Caco-2 (cell line): ENCODE measurements at regions of chr2 and their contacts with region 1.

Region 1: DNA sequence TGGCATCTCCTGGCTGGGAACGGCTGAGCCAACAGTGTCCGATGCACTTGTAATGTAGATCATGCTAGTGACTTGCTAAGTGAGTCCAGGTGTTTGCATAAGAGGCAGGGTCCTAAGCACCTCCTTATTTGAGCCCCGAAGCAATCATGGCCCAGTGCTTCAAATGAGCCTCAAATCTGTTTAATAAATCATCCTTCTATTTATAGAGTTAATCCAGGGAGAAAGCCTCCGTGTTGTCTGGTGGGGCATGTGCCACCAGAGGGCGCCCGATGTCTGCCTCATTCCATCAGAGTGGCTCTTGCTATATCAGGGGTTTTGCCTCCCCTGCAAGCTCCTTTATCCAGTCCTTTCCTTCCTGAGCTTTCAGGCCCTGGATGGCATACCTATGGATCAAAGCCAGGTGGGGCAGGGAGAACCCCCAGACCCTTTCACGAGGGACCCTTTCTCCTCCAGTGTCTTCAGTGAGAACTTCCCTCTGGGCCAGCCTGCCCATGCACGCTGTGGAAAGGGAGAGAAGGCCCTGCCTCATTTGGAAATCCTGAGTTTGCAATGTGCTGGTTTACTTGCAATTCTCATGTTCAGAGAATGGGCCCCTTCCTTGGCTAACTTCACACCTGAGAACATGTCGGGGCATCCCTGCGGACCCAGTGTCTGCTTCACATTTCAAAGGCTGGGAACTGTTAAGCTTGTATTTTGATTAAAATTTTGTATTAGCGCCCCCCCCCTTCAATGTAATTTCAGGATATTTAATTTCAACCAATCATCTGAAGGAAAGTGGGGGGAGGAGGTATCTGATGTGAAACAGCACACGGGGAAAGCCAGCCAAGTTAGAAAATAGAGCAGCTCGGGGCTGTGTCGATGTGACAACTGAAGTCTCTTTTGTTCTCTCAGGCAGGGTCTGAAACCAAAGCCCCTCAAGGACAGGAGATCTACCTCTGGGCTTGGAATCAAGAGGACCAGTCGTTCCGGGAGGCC is 39.7 kb downstream of the RDH14 start:
- DNase-seq: peak; percentile 75 to 79
- H3K4me3 ChIP-seq: no peak overlapping the region
- H3K4me3 Mint-ChIP-seq: no peak overlapping the region
- H3K27ac Mint-ChIP-seq: no peak overlapping the region
- H3K4me1 ChIP-seq: 0 out of 2 replicates have a peak, but pooled peaks cover 4% of the 10 kb centered on the region
- H3K4me1 Mint-ChIP-seq: no peaks in the 10 kb centered on the region
- H3K27me3 ChIP-seq: no peaks in the 10 kb centered on the region
- H3K27me3 Mint-ChIP-seq: peaks cover 3% of the 10 kb centered on the region
- CTCF ChIP-seq: peak; percentile 93 to 96

Region 2: GRCh38 chr2:18387441-18388206 is 133.1 kb before region 1 on chr2:
- CTCF ChIA-PET with region 1: no interaction called
- POLR2A ChIA-PET with region 1: no interaction called
- intact Hi-C with region 1: loop called (anchors 2 kb)
- DNase-seq: peak; percentile 72 to 82
- H3K4me3 ChIP-seq: no peak overlapping the region
- H3K4me3 Mint-ChIP-seq: no peak overlapping the region
- H3K27ac Mint-ChIP-seq: no peak overlapping the region
- H3K4me1 ChIP-seq: no peaks in the 10 kb centered on the region; the same call in 1 of the 2 replicates
- H3K4me1 Mint-ChIP-seq: no peaks in the 10 kb centered on the region
- H3K27me3 ChIP-seq: no peaks in the 10 kb centered on the region; the same call in 1 of the 2 replicates
- H3K27me3 Mint-ChIP-seq: peaks cover 3% of the 10 kb centered on the region
- CTCF ChIP-seq: peak; percentile 95 to 98

Region 3: DNA sequence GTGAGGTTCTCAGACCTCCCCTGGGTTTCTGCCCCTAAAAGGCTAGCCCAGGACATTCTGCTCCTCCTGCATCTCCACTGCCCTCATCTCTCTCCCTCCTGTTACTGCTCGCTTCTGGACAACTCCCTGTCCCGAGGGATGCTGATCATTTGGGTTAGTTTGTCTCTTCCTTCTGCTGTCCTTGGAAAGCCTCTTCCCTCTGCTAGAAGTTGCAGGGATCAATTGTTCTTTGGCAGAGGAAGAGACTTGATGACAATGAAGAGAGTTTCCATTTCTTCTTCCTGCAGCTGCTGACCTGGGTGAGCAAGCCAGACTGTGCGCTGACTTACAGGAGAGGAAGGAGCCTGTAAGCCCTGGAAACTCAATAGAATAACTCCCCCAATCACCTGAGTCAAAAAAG is 29.2 kb before region 1 on chr2:
- CTCF ChIA-PET with region 1: no interaction called
- POLR2A ChIA-PET with region 1: no interaction called
- intact Hi-C with region 1: no loop called
- DNase-seq: no peak
- H3K4me3 ChIP-seq: no peak overlapping the region
- H3K4me3 Mint-ChIP-seq: no peak overlapping the region
- H3K27ac Mint-ChIP-seq: no peak overlapping the region
- H3K4me1 ChIP-seq: no peaks in the 10 kb centered on the region
- H3K4me1 Mint-ChIP-seq: no peaks in the 10 kb centered on the region
- H3K27me3 ChIP-seq: no peaks in the 10 kb centered on the region
- H3K27me3 Mint-ChIP-seq: peaks cover 11% of the 10 kb centered on the region
- CTCF ChIP-seq: no peak

Region 4: DNA sequence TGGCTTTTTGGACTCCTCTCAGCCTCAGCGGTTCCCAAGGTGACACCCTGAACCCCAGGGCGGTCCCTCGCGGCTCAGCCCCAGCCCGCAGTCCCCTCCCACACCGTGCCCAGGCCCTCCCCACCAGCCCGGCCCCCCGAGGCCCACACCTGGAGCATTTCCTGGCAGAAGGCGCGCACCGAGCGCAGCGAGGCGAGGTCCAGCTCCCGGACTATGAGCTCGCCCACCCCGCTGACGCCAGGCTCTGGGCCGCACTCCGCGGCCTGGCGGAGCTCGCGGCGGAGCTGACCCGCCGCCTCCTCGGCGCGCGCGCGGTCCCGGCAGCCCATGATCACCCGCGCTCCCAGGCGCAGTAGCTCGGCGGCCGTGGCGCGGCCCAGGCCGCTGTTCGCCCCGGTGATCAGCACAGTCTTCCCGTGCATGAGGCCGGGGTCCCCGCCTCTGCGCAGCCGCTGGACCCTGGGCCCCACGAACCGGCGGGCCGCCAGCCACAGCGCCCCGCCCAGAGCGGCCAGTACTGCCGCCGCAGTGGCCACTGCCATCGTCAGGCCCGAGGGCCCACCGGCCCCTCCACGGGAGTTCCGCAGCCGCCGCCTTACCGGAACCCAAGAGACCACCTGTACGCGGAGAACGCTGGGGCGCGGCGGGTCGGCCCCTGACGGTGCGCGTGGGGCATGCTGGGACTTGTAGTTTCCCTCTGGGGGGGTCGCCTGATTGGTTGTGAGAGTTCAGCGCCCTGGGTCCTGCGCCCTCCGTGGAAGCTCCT is 39.5 kb after region 1 on chr2 and contains the start of gene RDH14:
- CTCF ChIA-PET with region 1: interaction called, 5 read pairs
- POLR2A ChIA-PET with region 1: no interaction called
- intact Hi-C with region 1: loop called (anchors 1 kb)
- DNase-seq: peak; percentile 95 to 96
- H3K4me3 ChIP-seq: peak within 1 kb of the TSS; percentile 73
- H3K4me3 Mint-ChIP-seq: peak within 1 kb of the TSS; percentile 89
- H3K27ac Mint-ChIP-seq: peak within 1 kb of the TSS; percentile 80
- H3K4me1 ChIP-seq: peaks cover 8% of the 10 kb centered on the region
- H3K4me1 Mint-ChIP-seq: peaks cover 14% of the 10 kb centered on the region
- H3K27me3 ChIP-seq: no peaks in the 10 kb centered on the region
- H3K27me3 Mint-ChIP-seq: no peaks in the 10 kb centered on the region
- CTCF ChIP-seq: no peak
- total RNA-seq, gene RDH14: 16.3 and 17.0 TPM in 2 replicates

Region 5: GRCh38 chr2:18741895-18742732 is 221.4 kb after region 1 on chr2:
- CTCF ChIA-PET with region 1: interaction called, 5 read pairs
- POLR2A ChIA-PET with region 1: no interaction called
- intact Hi-C with region 1: loop called (anchors 1 kb)
- DNase-seq: no peak
- H3K4me3 ChIP-seq: no peak overlapping the region
- H3K4me3 Mint-ChIP-seq: no peak overlapping the region
- H3K27ac Mint-ChIP-seq: no peak overlapping the region
- H3K4me1 ChIP-seq: no peaks in the 10 kb centered on the region
- H3K4me1 Mint-ChIP-seq: no peaks in the 10 kb centered on the region
- H3K27me3 ChIP-seq: no peaks in the 10 kb centered on the region
- H3K27me3 Mint-ChIP-seq: peaks cover 3% of the 10 kb centered on the region
- CTCF ChIP-seq: peak in 1 of 2 experiments; percentile 21